Naive thymus-derived CD4-positive, alpha-beta T cell (primary cell): ENCODE measurements at regions of chr9 and their contacts with region 1.

Region 1: DNA sequence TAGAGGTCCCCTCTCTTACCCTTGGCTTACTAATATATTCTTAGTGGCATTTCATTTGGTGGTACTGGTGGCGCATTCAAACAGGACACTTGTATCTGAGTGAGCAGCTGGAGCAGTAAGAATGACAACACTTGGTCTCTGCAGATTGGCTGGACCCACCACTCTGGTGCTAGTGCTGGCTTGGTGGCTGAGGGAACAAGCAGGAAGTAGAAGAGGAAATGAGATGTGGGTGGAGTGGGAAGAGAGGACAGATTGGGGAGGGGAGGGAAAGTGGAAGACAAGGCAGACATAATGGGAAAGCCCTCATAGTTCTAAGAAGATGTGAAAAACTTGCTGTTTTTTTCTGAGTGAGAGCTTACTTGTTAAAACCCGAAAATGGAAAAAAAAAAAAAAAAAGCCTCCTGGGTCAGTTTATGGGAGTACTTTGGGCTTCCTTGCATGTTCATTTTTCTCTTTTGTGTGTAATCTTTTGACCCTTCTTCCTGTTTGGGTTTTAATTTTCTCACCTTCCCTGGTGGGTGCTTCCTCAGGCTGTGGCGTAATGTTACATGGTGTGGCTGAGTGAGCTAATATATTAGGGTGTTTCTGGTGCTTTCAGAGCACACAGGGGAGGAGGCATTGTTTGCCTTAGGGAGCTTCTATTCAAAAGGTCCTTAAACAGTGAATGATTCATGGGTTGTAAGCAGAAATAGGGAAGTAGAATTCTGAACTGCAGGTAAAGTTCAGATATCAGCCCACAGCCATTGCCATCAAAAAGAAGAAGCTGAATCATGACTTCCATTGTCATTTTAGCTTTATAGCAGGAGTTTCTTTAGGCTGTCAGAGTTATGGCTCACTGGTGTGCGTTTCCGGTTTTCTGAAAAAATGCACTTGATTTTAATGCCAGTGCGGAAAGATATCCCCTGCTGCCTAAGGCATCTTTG is 52.3 kb downstream of the TLE4 start:
- DNase-seq: peak in 3 of 9 donors; percentile 5 to 26 (median 8)
- ATAC-seq: peak; percentile 89
- H3K4me3 ChIP-seq: peak overlapping the region; percentile 22
- H3K4me3 Mint-ChIP-seq: peak overlapping the region; percentile 62 to 76 (median 72)
- H3K27ac ChIP-seq: no peak overlapping the region
- H3K27ac Mint-ChIP-seq: peak overlapping the region; percentile 8 to 89 (median 29)
- H3K4me1 ChIP-seq: peaks cover 10 to 11% of the 10 kb centered on the region in 2 donors
- H3K4me1 Mint-ChIP-seq: peaks cover 16 to 68% (median 67%) of the 10 kb centered on the region in 7 donors
- H3K27me3 ChIP-seq: no peaks in the 10 kb centered on the region
- H3K27me3 Mint-ChIP-seq: no peaks in the 10 kb centered on the region

Region 2: DNA sequence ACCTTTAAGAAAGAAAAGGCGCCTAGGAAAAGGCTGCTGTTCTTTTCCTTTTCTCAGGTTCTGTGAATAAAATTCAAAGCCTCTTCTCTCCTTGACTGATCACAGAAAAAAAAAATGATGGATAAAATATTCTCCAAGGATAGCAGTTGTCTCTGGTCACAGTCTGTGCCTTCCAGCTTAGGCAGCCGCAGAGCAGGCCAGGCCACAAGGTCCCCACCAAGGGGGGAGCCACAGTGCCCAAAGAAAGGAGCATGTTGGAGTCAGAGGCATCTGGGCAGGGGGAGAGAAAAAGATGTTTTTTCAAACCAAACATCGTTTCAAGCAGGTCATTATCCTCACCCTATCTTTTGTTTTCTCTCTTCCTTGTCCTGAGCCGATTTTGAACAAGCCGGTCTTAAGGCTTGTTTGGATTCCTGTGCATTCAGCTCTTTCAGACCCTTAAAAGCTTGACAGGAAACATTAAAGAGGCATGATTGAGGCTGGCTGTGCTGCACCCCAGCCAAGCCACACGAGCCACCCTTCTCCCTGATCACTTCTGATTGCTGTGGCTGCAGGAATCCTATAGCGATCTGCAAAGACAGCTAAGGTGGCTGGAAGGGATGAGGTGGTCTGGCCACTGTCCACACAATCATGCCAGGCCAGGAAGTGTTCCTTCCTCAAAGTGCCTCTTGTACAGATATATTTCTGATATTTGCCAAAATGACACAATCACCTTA is 336.9 kb before region 1 on chr9:
- CTCF ChIA-PET with region 1: no interaction called
- POLR2A ChIA-PET with region 1: no interaction called
- intact Hi-C with region 1: no loop called
- DNase-seq: no peak
- ATAC-seq: no peak
- H3K4me3 ChIP-seq: no peak overlapping the region
- H3K4me3 Mint-ChIP-seq: no peak overlapping the region
- H3K27ac ChIP-seq: no peak overlapping the region
- H3K27ac Mint-ChIP-seq: no peak overlapping the region
- H3K4me1 ChIP-seq: no peaks in the 10 kb centered on the region
- H3K4me1 Mint-ChIP-seq: no peaks in the 10 kb centered on the region
- H3K27me3 ChIP-seq: no peaks in the 10 kb centered on the region
- H3K27me3 Mint-ChIP-seq: no peaks in the 10 kb centered on the region

Region 3: DNA sequence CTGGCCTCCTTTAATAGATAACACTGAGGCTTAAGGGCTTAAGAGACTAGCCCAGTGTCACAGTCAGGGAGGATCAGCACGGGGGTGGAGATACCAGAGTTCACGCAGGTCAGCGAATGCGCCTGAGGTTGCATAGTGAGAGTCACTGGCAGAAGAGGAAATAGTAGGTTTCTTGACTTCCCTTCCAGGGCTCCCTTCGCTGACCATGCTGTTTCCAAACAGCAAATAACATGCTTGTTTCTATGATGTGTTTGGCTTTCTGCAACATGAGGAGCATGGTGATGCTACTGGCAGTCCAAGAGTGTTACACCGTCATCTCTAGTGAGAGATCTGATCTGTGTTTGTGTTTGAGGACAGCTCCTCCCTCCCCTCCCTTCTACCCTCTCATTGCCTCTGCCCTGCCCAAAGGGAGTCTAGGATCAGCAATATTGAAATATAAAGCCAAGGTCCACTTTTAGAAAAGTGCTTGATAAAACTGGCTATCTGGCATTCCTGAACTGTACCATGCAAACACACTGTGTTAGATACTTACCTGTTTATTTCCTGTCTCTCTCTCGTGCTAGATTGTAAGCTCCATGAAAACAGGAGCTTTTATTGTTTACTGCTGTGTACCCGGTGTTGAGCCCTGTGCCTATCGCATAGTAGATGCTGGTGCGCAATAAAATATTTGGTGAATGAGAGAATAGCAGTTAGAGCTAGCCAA is 40.0 kb before region 1 on chr9:
- CTCF ChIA-PET with region 1: no interaction called
- POLR2A ChIA-PET with region 1: interaction called, 4 read pairs
- intact Hi-C with region 1: loop called in 1 of 2 experiments (anchors 2 kb)
- DNase-seq: no peak
- ATAC-seq: peak; percentile 84
- H3K4me3 ChIP-seq: peak overlapping the region; percentile 10
- H3K4me3 Mint-ChIP-seq: peak overlapping the region in 9 of 10 donors; percentile 39 to 76 (median 63)
- H3K27ac ChIP-seq: no peak overlapping the region
- H3K27ac Mint-ChIP-seq: peak overlapping the region in 6 of 9 donors; percentile 1 to 89 (median 26)
- H3K4me1 ChIP-seq: peaks cover 45 to 47% of the 10 kb centered on the region in 2 donors
- H3K4me1 Mint-ChIP-seq: peaks cover 50 to 93% (median 85%) of the 10 kb centered on the region in 7 donors
- H3K27me3 ChIP-seq: no peaks in the 10 kb centered on the region
- H3K27me3 Mint-ChIP-seq: peaks cover 0 to 2% (median 0%) of the 10 kb centered on the region in 5 donors

Region 4: DNA sequence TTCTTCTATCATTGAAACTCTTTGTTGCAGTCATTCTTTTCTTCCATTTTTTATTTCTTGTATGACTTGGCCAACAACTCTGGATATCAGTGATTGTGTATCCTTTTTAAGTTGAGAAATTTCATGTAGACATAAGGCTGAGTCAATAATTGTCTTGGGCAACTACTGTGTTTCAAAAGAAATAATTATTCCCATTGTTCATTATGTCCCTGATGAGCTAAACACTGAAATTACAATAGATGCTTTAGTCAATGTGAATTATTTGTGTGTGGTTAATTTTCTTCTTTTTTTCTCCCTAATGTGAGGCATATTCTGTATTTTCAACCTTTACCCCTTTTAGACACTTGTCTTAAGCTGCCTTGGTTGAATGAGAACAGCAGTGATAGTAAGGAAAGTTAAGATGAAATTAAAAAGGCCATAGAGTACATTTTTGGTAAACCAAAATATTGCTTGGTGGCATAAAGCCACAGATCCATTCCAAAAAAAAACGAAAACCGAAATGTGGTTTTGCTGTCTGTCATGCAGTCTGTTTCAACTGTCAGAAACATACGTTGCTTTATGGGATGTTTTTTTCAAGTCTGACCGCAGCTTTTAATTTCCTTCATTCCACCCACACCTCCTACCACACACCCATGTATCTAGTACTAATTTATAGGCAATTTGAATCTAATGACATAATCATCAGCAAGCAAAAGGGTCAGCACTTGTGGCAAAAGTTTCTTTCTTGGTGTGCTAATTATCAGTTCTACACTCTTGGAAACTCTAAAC is 31.1 kb before region 1 on chr9:
- CTCF ChIA-PET with region 1: no interaction called
- POLR2A ChIA-PET with region 1: no interaction called
- intact Hi-C with region 1: loop called in 1 of 2 experiments (anchors 2 kb)
- DNase-seq: peak in 7 of 9 donors; percentile 26 to 65 (median 59)
- ATAC-seq: peak; percentile 80
- H3K4me3 ChIP-seq: no peak overlapping the region
- H3K4me3 Mint-ChIP-seq: peak overlapping the region in 9 of 10 donors; percentile 45 to 78 (median 69)
- H3K27ac ChIP-seq: no peak overlapping the region
- H3K27ac Mint-ChIP-seq: peak overlapping the region in 6 of 9 donors; percentile 28 to 76 (median 58)
- H3K4me1 ChIP-seq: peaks cover 14 to 20% of the 10 kb centered on the region in 2 donors
- H3K4me1 Mint-ChIP-seq: peaks cover 50 to 89% (median 86%) of the 10 kb centered on the region in 7 donors
- H3K27me3 ChIP-seq: no peaks in the 10 kb centered on the region
- H3K27me3 Mint-ChIP-seq: peaks cover 0 to 33% (median 0%) of the 10 kb centered on the region in 5 donors

Region 5: DNA sequence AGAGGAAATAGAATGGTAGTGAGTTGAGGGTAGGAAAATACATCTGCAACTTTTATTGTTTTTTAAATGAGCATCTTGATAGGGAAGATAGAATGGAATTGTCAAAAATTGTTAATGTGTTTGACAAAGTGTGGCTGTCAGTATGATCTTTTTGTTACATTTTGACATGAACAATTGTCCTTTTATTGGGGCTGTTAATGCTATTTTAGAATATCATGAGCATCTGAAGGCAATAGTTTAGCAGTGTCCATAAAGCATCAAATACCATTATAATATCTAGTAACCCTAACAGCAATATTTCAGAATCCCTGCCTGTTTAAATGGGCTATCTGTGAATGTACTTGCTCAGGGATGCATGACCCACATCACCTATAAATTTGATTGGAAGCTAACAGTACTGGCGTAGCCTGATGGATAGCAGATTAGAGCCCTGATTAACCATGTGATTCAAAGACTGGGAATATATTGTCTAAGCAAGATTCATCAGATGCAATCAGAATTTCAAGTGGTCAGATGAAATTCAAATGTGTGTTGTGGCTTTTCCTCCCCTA is 14.5 kb before region 1 on chr9:
- CTCF ChIA-PET with region 1: no interaction called
- POLR2A ChIA-PET with region 1: interaction called, 3 read pairs
- intact Hi-C with region 1: loop called in 1 of 2 experiments (anchors 2 kb)
- DNase-seq: no peak
- ATAC-seq: no peak
- H3K4me3 ChIP-seq: no peak overlapping the region
- H3K4me3 Mint-ChIP-seq: no peak overlapping the region
- H3K27ac ChIP-seq: no peak overlapping the region
- H3K27ac Mint-ChIP-seq: peak overlapping the region in 2 of 9 donors; percentile 28
- H3K4me1 ChIP-seq: peaks cover 3% of the 10 kb centered on the region in 2 donors
- H3K4me1 Mint-ChIP-seq: peaks cover 5 to 69% (median 60%) of the 10 kb centered on the region in 7 donors
- H3K27me3 ChIP-seq: no peaks in the 10 kb centered on the region
- H3K27me3 Mint-ChIP-seq: no peaks in the 10 kb centered on the region

Region 6: DNA sequence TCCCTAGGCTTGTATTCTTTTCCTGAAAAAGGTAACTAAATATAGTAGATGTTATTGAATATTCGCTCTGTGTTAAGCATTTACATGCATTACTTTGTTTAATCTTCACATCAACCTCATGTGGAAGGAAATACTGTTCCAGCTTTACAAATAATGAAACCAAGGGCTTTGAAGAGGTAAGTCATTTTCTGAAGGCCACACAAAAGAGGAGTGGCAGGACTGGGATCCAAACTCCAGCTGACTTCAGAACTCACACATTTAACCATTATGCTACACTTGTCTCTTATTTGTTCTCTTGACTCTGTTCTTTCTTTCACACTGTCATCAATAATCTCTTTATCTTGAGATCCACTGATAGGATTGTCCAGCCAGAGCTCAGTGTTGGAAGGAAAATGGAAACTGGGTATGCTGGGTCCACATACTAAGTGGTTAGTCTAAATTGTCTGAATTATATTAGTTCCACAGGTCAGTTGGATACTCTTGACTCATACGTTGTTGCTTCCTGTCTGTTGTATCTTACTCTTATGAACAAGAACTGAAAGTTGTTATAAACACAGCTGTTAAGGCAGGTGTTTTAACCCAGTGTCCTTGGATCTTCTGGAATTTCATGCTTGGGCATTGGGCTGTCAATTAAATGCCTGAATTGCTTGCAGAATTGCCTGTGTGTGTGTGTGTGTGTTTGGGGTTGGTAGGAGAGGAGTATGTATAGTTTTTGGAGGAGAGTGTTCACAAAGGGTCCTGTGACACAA is 13.3 kb after region 1 on chr9:
- CTCF ChIA-PET with region 1: no interaction called
- POLR2A ChIA-PET with region 1: no interaction called
- intact Hi-C with region 1: loop called in 1 of 2 experiments (anchors 2 kb)
- DNase-seq: no peak
- ATAC-seq: no peak
- H3K4me3 ChIP-seq: no peak overlapping the region
- H3K4me3 Mint-ChIP-seq: peak overlapping the region in 1 of 10 donors; percentile 8
- H3K27ac ChIP-seq: no peak overlapping the region
- H3K27ac Mint-ChIP-seq: peak overlapping the region in 3 of 9 donors; percentile 3 to 20 (median 8)
- H3K4me1 ChIP-seq: peaks cover 11 to 21% of the 10 kb centered on the region in 2 donors
- H3K4me1 Mint-ChIP-seq: peaks cover 31 to 93% (median 78%) of the 10 kb centered on the region in 7 donors
- H3K27me3 ChIP-seq: no peaks in the 10 kb centered on the region
- H3K27me3 Mint-ChIP-seq: no peaks in the 10 kb centered on the region

Region 7: GRCh38 chr9:79686381-79687130 is 62.5 kb after region 1 on chr9:
- CTCF ChIA-PET with region 1: no interaction called
- POLR2A ChIA-PET with region 1: no interaction called
- intact Hi-C with region 1: loop called in 1 of 2 experiments (anchors 10 kb)
- DNase-seq: no peak
- ATAC-seq: no peak
- H3K4me3 ChIP-seq: no peak overlapping the region
- H3K4me3 Mint-ChIP-seq: peak overlapping the region in 4 of 10 donors; percentile 9 to 54 (median 30)
- H3K27ac ChIP-seq: no peak overlapping the region
- H3K27ac Mint-ChIP-seq: peak overlapping the region in 7 of 9 donors; percentile 1 to 82 (median 35)
- H3K4me1 ChIP-seq: peaks cover 6 to 12% of the 10 kb centered on the region in 2 donors
- H3K4me1 Mint-ChIP-seq: peaks cover 20 to 91% (median 67%) of the 10 kb centered on the region in 7 donors
- H3K27me3 ChIP-seq: no peaks in the 10 kb centered on the region
- H3K27me3 Mint-ChIP-seq: no peaks in the 10 kb centered on the region

Region 8: DNA sequence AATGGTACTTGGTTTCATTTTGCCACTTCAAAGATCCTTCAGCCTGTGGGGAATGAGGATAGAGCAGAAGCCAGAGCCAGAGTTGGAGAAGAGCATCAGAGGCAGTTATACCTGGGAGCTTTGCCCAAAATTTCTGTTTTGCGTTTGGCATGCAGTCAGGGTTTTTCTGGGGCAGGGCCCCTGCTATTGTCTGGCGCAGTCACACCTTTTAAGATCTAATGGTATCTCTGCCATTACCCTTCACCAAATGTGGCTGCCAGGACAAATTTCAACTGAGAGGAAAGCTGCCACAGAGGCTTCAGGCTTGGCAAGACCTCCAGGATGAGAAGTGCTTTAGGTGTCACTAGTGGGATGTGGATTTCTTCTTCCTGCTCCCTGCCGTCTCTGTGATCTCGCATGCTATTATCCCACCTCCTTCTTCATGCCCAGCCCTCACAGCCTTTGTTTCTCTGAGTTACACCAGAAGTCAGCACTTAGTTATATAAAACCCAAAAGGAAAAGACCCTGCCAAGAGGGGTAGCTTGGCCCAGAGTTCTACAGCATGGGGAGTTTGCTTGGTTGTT is 304.7 kb after region 1 on chr9:
- CTCF ChIA-PET with region 1: no interaction called
- POLR2A ChIA-PET with region 1: no interaction called
- intact Hi-C with region 1: no loop called
- DNase-seq: no peak
- ATAC-seq: no peak
- H3K4me3 ChIP-seq: no peak overlapping the region
- H3K4me3 Mint-ChIP-seq: no peak overlapping the region
- H3K27ac ChIP-seq: no peak overlapping the region
- H3K27ac Mint-ChIP-seq: peak overlapping the region in 1 of 9 donors; percentile 37
- H3K4me1 ChIP-seq: no peaks in the 10 kb centered on the region
- H3K4me1 Mint-ChIP-seq: no peaks in the 10 kb centered on the region
- H3K27me3 ChIP-seq: no peaks in the 10 kb centered on the region
- H3K27me3 Mint-ChIP-seq: no peaks in the 10 kb centered on the region